CD4-positive, alpha-beta memory T cell (primary cell): ENCODE measurements at regions of chr15 and their contacts with region 1.

Region 1: DNA sequence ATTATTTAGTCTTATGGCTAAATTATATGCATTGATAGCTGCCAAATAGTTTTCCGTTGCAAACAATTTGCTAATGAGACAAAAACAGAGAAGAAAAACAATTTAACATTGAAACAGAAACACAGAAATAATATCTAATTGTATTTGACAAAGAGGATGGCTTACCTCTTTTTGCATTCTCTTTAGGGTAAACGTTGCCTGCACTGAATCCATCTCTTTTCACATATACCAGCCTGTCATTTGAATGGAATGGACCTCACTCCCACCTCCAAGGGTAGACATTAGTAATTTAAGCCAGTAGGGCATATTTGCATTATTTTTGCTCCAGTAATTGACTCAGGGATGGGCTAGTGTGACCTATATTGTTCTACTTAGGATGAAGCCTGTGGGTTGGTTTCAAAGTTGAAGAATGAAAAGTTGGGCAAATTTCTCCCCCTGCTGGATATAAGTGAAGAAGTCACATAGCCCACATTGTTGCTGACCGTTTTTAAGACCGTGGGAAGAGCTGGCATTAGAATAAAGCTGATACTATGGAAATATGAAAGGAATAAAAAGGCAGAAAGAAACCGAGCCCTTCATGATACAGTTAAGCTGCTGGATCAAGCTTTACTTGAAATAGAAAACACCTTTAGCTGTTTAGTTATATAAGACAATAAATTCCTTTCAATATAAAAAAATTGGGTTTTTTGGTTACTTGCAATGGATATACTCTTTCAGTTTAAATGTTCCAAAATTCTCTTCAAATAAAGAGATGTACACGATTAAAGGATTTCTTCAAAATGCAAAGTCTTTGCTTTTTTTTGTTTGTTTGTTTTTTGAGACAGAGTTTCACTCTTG is 26.9 kb downstream of the PIERCE2 start:
- DNase-seq: peak in 4 of 5 donors; percentile 23 to 36 (median 30)
- H3K4me3 ChIP-seq: no peak overlapping the region
- H3K4me3 Mint-ChIP-seq: no peak overlapping the region
- H3K27ac ChIP-seq: no peak overlapping the region
- H3K27ac Mint-ChIP-seq: no peak overlapping the region
- H3K4me1 ChIP-seq: peaks cover 4% of the 10 kb centered on the region
- H3K4me1 Mint-ChIP-seq: peaks cover 3 to 7% (median 5%) of the 10 kb centered on the region in 4 donors
- H3K27me3 ChIP-seq: no peaks in the 10 kb centered on the region
- H3K27me3 Mint-ChIP-seq: peaks cover 0 to 1% of the 10 kb centered on the region in 2 donors

Region 2: GRCh38 chr15:55196458-55197361 is 238.5 kb before region 1 on chr15 and contains the start of gene RSL24D1:
- CTCF ChIA-PET with region 1: interaction called, 6 read pairs
- POLR2A ChIA-PET with region 1: interaction called, 3 read pairs
- intact Hi-C with region 1: loop called (anchors 5 kb)
- DNase-seq: peak; percentile 94 to 98 (median 97)
- H3K4me3 ChIP-seq: peak within 1 kb of the TSS; percentile 90 to 97
- H3K4me3 Mint-ChIP-seq: no peak within 1 kb of the TSS
- H3K27ac ChIP-seq: peak within 1 kb of the TSS; percentile 87
- H3K27ac Mint-ChIP-seq: no peak within 1 kb of the TSS
- H3K4me1 ChIP-seq: peaks cover 40% of the 10 kb centered on the region
- H3K4me1 Mint-ChIP-seq: peaks cover 10 to 17% (median 13%) of the 10 kb centered on the region in 4 donors
- H3K27me3 ChIP-seq: no peaks in the 10 kb centered on the region
- H3K27me3 Mint-ChIP-seq: no peaks in the 10 kb centered on the region
- total RNA-seq, gene RSL24D1: 103 to 107 TPM

Region 3: GRCh38 chr15:55290528-55291057 is 144.6 kb before region 1 on chr15:
- CTCF ChIA-PET with region 1: interaction called, 5 read pairs
- POLR2A ChIA-PET with region 1: no interaction called
- intact Hi-C with region 1: loop called (anchors 1 kb)
- DNase-seq: peak; percentile 80 to 84 (median 82)
- H3K4me3 ChIP-seq: peak overlapping the region; percentile 66 to 85
- H3K4me3 Mint-ChIP-seq: peak overlapping the region; percentile 88 to 96 (median 93)
- H3K27ac ChIP-seq: peak overlapping the region; percentile 96
- H3K27ac Mint-ChIP-seq: peak overlapping the region; percentile 87 to 96 (median 95)
- H3K4me1 ChIP-seq: peaks cover 36% of the 10 kb centered on the region
- H3K4me1 Mint-ChIP-seq: peaks cover 26 to 49% (median 31%) of the 10 kb centered on the region in 4 donors
- H3K27me3 ChIP-seq: no peaks in the 10 kb centered on the region
- H3K27me3 Mint-ChIP-seq: no peaks in the 10 kb centered on the region

Region 4: GRCh38 chr15:55407949-55408791 is 27.0 kb before region 1 on chr15 and contains the starts of genes CCPG1 and PIERCE2:
- CTCF ChIA-PET with region 1: interaction called, 30 read pairs
- POLR2A ChIA-PET with region 1: interaction called, 6 read pairs
- intact Hi-C with region 1: loop called (anchors 1 kb)
- DNase-seq: peak; percentile 87 to 91 (median 90)
- H3K4me3 ChIP-seq: peak within 1 kb of the TSS; percentile 45 to 91
- H3K4me3 Mint-ChIP-seq: peak within 1 kb of the TSS; percentile 91 to 96 (median 95)
- H3K27ac ChIP-seq: peak within 1 kb of the TSS; percentile 70
- H3K27ac Mint-ChIP-seq: peak within 1 kb of the TSS; percentile 86 to 96 (median 94)
- H3K4me1 ChIP-seq: peaks cover 31% of the 10 kb centered on the region
- H3K4me1 Mint-ChIP-seq: peaks cover 18 to 39% (median 27%) of the 10 kb centered on the region in 4 donors
- H3K27me3 ChIP-seq: no peaks in the 10 kb centered on the region
- H3K27me3 Mint-ChIP-seq: no peaks in the 10 kb centered on the region
- total RNA-seq, gene CCPG1: 35.4 to 38.2 TPM
- total RNA-seq, gene PIERCE2: not detected

Region 5: GRCh38 chr15:55481842-55482241 is 46.6 kb after region 1 on chr15:
- CTCF ChIA-PET with region 1: no interaction called
- POLR2A ChIA-PET with region 1: no interaction called
- intact Hi-C with region 1: no loop called
- DNase-seq: no peak
- H3K4me3 ChIP-seq: no peak overlapping the region
- H3K4me3 Mint-ChIP-seq: no peak overlapping the region
- H3K27ac ChIP-seq: no peak overlapping the region
- H3K27ac Mint-ChIP-seq: no peak overlapping the region
- H3K4me1 ChIP-seq: no peaks in the 10 kb centered on the region
- H3K4me1 Mint-ChIP-seq: peaks cover 0 to 2% (median under 1%) of the 10 kb centered on the region in 4 donors
- H3K27me3 ChIP-seq: no peaks in the 10 kb centered on the region
- H3K27me3 Mint-ChIP-seq: peaks cover 2 to 4% of the 10 kb centered on the region in 2 donors